Heart left ventricle (tissue), 16 donors: ENCODE measurements at regions of chr2 and their contacts with region 1.

Region 1: GRCh38 chr2:76197842-76198448 is 487.2 kb upstream of the GCFC2 start:
- DNase-seq: peak in 4 of 5 donors; percentile 14 to 36 (median 29)
- ATAC-seq: no peak
- H3K4me3 ChIP-seq: no peak overlapping the region
- H3K27ac ChIP-seq: no peak overlapping the region
- H3K4me1 ChIP-seq: no peaks in the 10 kb centered on the region
- H3K27me3 ChIP-seq: peaks cover 0 to 3% (median 0%) of the 10 kb centered on the region in 9 donors
- CTCF ChIP-seq: peak; percentile 59 to 88 (median 77)
- POLR2A ChIP-seq: no peak

Region 2: GRCh38 chr2:75787532-75788132 is 410.3 kb before region 1 on chr2:
- intact Hi-C with region 1: loop called in 1 of 10 experiments (anchors 10 kb)
- DNase-seq: no peak
- ATAC-seq: no peak
- H3K4me3 ChIP-seq: no peak overlapping the region
- H3K27ac ChIP-seq: no peak overlapping the region
- H3K4me1 ChIP-seq: peaks cover 0 to 5% (median 0%) of the 10 kb centered on the region in 12 donors
- H3K27me3 ChIP-seq: no peaks in the 10 kb centered on the region
- CTCF ChIP-seq: peak in 10 of 12 donors; percentile 19 to 58 (median 40)
- POLR2A ChIP-seq: no peak

Region 3: GRCh38 chr2:76464310-76464709 is 266.4 kb after region 1 on chr2:
- intact Hi-C with region 1: loop called in 1 of 10 experiments (anchors 10 kb)
- DNase-seq: no peak
- ATAC-seq: no peak
- H3K4me3 ChIP-seq: no peak overlapping the region
- H3K27ac ChIP-seq: no peak overlapping the region
- H3K4me1 ChIP-seq: no peaks in the 10 kb centered on the region
- H3K27me3 ChIP-seq: no peaks in the 10 kb centered on the region
- CTCF ChIP-seq: peak in 1 of 12 donors; percentile 14
- POLR2A ChIP-seq: no peak

Region 4: GRCh38 chr2:76599732-76600368 is 401.9 kb after region 1 on chr2:
- intact Hi-C with region 1: loop called in 9 of 10 experiments (anchors 2 to 10 kb)
- DNase-seq: peak in 4 of 5 donors; percentile 24 to 55 (median 37)
- ATAC-seq: peak; percentile 73 to 86 (median 78)
- H3K4me3 ChIP-seq: no peak overlapping the region
- H3K27ac ChIP-seq: no peak overlapping the region
- H3K4me1 ChIP-seq: no peaks in the 10 kb centered on the region
- H3K27me3 ChIP-seq: no peaks in the 10 kb centered on the region
- CTCF ChIP-seq: peak; percentile 55 to 76 (median 68)
- POLR2A ChIP-seq: no peak